Activated CD4-positive, alpha-beta T cell treated with anti-CD3 and anti-CD28 coated beads, Interleukin-2, amount 10 ng/mL, durations not matched to agents 24 days and 14 days (primary cell): ENCODE measurements at regions of chr18 and their contacts with region 1.

Region 1: GRCh38 chr18:74040459-74041332 is 106.9 kb downstream of the FBXO15 start:
- DNase-seq: peak; percentile 93
- H3K4me3 Mint-ChIP-seq: no peak overlapping the region
- H3K27ac Mint-ChIP-seq: no peak overlapping the region
- H3K4me1 Mint-ChIP-seq: no peaks in the 10 kb centered on the region
- H3K27me3 Mint-ChIP-seq: no peaks in the 10 kb centered on the region

Region 2: DNA sequence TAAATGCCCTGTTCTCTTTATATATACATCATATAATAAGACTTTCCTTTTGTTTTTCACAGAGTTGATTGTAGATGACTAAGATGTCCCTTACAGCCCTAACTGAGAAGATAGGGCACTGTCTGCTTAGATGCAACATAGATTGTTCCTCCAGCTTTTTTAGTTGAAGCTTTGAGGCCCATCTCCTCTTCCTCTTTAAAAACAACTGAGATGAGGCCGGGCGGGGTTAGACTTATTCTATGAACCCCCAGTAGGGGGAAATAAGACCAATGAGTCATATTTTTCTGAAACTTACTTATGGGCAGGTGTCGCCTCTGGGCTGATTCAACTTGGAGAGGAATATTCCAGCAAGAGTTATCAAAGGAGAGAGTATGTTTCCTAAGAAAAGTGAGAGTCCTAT is 22.3 kb after region 1 on chr18:
- intact Hi-C with region 1: loop called (anchors 1 kb)
- DNase-seq: peak; percentile 83
- H3K4me3 Mint-ChIP-seq: peak overlapping the region; percentile 82
- H3K27ac Mint-ChIP-seq: peak overlapping the region; percentile 84
- H3K4me1 Mint-ChIP-seq: peaks cover 48% of the 10 kb centered on the region
- H3K27me3 Mint-ChIP-seq: no peaks in the 10 kb centered on the region

Region 3: DNA sequence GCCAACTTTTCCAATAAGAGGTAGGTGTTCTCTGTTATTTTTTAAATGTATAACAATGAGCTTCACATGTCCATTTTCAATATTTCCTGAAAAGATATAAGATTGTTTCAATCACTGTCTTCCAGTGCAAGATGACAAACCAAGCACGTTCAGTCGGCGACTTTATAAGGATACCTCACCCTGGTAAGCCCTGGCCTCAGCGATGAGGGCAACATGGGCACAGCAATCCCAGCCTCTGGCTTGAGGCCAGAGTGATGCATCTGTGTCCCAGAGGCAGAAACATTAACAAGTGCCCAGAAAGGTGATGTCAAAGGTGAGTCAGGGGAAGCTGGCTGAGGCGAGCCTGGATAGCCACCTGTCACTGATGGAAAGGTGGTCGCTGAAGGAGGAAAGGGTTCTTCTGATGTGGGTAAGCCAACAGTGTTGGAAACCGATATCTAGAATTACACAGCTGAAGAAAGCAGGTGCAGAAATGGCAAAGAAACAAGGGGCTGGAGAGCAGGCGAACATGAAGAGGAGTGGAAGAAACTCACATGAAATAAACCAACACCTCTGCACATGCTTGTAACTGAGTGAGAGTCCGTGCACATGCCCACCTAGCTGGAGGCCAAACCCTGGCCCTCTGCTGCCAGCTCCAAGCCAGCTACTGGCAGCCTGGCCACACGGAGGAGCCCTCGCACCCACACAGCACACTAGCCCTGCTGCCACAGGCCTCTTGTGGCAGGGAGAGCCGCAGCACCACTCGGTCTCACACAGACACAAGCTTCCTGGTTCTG is 41.5 kb after region 1 on chr18:
- intact Hi-C with region 1: loop called (anchors 2 kb)
- DNase-seq: peak; percentile 91
- H3K4me3 Mint-ChIP-seq: peak overlapping the region; percentile 80
- H3K27ac Mint-ChIP-seq: peak overlapping the region; percentile 96
- H3K4me1 Mint-ChIP-seq: peaks cover 18% of the 10 kb centered on the region
- H3K27me3 Mint-ChIP-seq: no peaks in the 10 kb centered on the region

Region 4: DNA sequence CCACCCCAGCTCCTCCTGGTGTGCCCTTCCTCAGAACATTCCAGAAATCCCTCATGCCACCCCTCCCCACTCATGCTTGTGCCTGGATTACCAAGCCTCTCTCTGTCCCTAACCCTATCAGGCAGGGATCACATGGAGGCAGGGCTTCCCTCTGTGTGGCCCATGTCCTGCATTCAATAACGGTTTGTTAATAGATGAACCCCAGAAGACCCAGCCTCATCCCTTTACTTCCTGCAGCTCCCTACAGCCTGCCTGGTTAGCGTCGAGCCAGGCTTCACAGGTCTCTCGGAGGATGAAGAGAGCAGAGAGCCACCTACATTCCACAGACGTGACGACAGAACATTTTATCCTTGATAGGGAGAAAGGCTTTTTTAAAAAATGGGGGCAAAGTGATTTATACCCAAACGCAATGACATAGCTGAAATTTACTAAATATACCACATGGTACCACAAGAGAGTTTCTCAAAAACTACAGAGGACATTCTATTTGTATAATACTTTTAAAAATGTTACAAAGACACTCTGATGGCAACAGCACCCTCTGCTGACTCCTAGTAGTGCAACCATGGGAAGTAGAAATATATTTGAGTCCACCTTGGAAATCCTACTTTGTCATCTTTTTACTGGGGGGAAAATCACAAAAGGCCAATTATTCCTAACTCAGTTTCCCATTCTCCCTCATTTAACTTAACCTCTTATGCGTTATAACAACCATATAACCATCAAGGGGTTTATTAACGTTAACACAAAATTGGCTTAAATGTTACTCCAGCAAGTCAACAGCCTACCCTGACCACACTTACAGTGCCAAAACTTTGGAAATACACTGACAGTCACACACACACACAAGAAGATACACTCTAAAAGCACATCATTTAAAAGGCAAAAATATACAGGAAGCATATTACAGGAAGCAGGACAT is 76.2 kb after region 1 on chr18:
- intact Hi-C with region 1: loop called (anchors 1 kb)
- DNase-seq: peak; percentile 79
- H3K4me3 Mint-ChIP-seq: no peak overlapping the region
- H3K27ac Mint-ChIP-seq: no peak overlapping the region
- H3K4me1 Mint-ChIP-seq: peaks cover 12% of the 10 kb centered on the region
- H3K27me3 Mint-ChIP-seq: peaks cover 1% of the 10 kb centered on the region

Region 5: DNA sequence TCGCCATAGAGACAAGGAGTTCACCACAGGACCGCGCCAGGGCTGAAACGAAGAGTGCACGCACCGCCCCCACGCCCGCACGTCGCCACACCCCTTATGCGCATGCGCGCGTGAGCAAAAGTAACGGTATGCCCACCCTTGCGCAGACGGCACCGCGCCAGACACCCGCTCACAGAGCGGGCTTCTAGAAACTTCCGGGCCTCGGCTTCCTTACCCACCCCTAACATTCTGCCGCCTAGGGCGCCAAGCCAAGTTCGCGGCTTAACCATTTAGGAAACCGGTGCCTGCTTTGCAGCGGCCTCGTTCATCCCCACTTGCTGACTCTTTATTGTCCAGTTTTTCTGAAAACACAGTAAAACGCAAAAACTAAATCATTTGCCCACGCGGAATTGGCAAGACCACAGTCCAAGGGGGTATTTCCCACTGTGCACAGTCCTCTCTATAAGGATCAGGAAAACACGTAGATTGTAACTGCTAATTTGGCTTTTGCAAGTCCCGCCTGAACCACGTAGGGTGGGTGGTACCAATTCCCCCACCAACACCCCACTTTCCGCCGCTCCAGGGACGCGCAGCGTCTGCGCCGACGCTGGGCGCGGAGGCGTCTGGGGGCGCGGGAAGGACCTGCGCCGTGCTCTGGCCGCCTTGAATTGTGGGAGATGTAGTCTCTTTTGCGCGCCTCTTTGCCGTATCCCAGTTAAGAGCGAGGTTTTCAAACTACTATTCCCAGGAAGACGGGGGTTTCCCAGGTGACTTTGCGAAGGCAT is 107.3 kb after region 1 on chr18 and contains the starts of genes FBXO15 and TIMM21:
- intact Hi-C with region 1: loop called (anchors 1 kb)
- DNase-seq: peak; percentile 99
- H3K4me3 Mint-ChIP-seq: peak within 1 kb of the TSS; percentile 98
- H3K27ac Mint-ChIP-seq: peak within 1 kb of the TSS; percentile 97
- H3K4me1 Mint-ChIP-seq: peaks cover 50% of the 10 kb centered on the region
- H3K27me3 Mint-ChIP-seq: peaks cover 5% of the 10 kb centered on the region
- total RNA-seq, gene FBXO15: 1.2 and 1.3 TPM in 2 replicates
- total RNA-seq, gene TIMM21: 61.8 and 71.8 TPM in 2 replicates

Region 6: DNA sequence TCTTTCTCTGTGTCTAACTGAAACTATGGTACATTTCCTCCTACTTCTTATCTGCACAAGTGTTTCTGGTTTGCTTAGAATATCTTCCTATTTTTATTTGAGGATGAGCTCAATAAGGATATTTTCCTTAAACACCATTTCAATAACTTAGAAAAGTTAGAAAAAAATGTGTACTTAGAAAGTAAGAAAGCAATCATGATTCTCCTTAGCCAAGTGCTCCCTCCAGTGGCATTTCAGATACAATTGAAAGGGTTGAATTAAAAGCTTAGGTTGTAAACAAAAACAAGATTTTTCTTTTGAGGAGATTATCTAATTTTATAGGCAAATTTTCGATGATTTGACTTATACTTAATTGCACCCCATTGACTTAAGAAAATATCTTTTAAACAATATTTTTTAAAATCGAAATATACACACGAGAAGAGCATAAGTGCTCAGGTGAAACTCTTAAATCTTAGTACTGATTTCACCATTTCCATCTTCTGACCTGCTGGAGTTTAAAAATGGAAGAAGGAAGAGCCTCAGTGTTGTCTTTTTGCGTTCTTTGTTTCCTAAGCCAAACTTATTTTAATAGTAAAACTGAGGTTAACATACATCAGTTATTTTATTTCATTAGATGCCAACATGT is 301.8 kb after region 1 on chr18:
- intact Hi-C with region 1: loop called (anchors 1 kb)
- DNase-seq: peak; percentile 72
- H3K4me3 Mint-ChIP-seq: no peak overlapping the region
- H3K27ac Mint-ChIP-seq: no peak overlapping the region
- H3K4me1 Mint-ChIP-seq: no peaks in the 10 kb centered on the region
- H3K27me3 Mint-ChIP-seq: peaks cover 39% of the 10 kb centered on the region